ENCODE measurements at regions of chr3 and their contacts with region 1.

Region 1: GRCh38 chr3:171874251-171874679 is 31.1 kb downstream of the TMEM212 start:
- DNase-seq: peak; percentile 87
- H3K4me3 ChIP-seq: no peak overlapping the region
- H3K27ac ChIP-seq: peak overlapping the region; percentile 74
- H3K4me1 ChIP-seq: peaks cover 34% of the 10 kb centered on the region
- H3K27me3 ChIP-seq: no peaks in the 10 kb centered on the region
- CTCF ChIP-seq: no peak

Region 2: DNA sequence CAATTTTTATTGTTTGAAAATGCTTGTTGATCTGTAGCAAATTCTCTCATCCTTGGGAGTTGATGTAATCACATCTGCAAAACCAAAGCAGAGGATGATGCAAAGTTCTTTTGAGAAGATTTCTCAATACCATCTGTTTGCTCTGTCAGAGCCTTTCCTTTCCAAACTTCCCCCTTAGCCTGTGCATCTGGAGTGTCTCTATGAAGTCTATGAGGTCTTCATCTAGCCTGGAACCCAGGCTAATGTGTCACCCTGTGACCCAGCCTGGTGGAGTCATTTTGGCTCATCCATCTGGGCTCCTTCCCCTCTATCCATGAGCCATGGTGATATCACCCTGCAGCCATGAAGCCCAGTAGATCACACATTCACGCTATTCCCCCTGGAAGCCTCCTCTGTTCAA is 1165.2 kb before region 1 on chr3:
- CTCF ChIA-PET with region 1: no interaction called
- POLR2A ChIA-PET with region 1: no interaction called
- intact Hi-C with region 1: no loop called
- DNase-seq: no peak
- H3K4me3 ChIP-seq: no peak overlapping the region
- H3K27ac ChIP-seq: no peak overlapping the region
- H3K4me1 ChIP-seq: no peaks in the 10 kb centered on the region
- H3K27me3 ChIP-seq: no peaks in the 10 kb centered on the region
- CTCF ChIP-seq: no peak

Region 3: DNA sequence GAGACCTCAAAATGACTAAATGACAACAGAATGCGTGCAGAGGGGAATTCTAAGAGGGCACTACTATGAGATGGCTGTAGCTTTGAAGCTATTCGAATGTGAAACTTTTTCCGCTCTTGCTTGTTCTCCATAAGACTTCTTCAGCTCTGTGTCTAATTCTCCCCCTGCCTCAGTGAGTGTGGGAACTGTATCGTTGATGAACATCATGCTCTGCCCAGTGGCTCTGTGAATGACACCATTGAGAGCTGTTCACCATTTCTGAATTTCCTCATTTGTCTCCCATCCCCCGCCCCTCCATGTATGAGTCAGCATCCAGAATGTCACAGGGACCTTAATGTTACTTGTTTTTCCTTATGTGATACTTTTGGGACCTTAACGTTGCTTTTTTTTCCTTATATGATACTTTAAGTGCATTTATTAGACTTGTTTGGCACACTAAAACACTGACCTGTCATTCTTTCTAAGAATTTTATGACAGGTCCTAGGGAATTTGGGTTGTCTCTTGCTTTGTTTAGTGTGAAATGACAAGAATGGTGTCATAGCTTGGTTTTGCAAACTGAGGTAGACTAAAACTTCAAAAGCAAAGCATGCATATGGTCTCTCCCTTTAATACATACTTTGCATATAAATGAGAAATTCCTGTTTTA is 264.7 kb after region 1 on chr3:
- CTCF ChIA-PET with region 1: no interaction called
- POLR2A ChIA-PET with region 1: no interaction called
- intact Hi-C with region 1: loop called (anchors 5 kb)
- DNase-seq: peak; percentile 63
- H3K4me3 ChIP-seq: no peak overlapping the region
- H3K27ac ChIP-seq: peak overlapping the region; percentile 77
- H3K4me1 ChIP-seq: peaks cover 80% of the 10 kb centered on the region
- H3K27me3 ChIP-seq: no peaks in the 10 kb centered on the region
- CTCF ChIP-seq: no peak